ENCODE measurements at regions of chr14 and their contacts with region 1.

Region 1: DNA sequence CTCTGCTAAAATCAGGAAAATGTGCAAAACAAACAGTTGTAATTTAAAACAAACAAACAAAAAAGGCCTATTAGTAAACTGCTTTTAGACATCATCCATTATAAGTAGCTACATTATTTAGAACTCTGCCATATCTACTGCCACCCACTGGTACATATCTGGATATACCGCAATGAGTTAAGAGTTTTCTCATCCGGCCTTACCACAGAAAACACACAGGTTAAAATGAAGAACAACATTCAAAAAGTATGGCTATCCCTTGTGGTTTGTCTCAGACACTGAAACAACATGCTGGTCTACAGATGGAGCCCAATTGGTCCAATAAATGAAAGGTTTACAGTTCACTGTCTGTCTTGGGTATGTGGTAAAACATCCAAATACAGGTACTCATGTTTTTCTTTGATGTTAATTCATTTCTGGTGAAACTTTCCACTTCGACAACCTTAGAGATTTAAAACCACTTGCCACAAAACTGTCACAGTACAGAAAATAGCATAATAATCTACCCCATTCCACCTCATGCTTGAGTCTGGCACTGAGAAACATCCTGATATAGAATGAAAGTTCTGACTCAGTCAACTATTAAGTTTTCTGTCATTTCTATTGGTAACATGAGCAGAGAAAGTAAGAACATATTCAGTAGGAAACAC is 354.3 kb downstream of the CEP128 start:
- DNase-seq: peak; percentile 9
- H3K4me3 Mint-ChIP-seq: no peak overlapping the region
- H3K27ac Mint-ChIP-seq: peak overlapping the region; percentile 39
- H3K4me1 Mint-ChIP-seq: peaks cover 14% of the 10 kb centered on the region
- H3K27me3 Mint-ChIP-seq: no peaks in the 10 kb centered on the region

Region 2: GRCh38 chr14:80213599-80213998 is 373.6 kb before region 1 on chr14:
- CTCF ChIA-PET with region 1: no interaction called
- intact Hi-C with region 1: loop called (anchors 10 kb)
- DNase-seq: peak; percentile 13
- H3K4me3 Mint-ChIP-seq: no peak overlapping the region
- H3K27ac Mint-ChIP-seq: no peak overlapping the region
- H3K4me1 Mint-ChIP-seq: peaks cover 4% of the 10 kb centered on the region
- H3K27me3 Mint-ChIP-seq: peaks cover 2% of the 10 kb centered on the region

Measured in activated naive CD4-positive, alpha-beta T cell treated with anti-CD3 and anti-CD28 coated beads for 36 hours (primary cell).